ENCODE measurements at regions of chr17 and their contacts with region 1.

Region 1: DNA sequence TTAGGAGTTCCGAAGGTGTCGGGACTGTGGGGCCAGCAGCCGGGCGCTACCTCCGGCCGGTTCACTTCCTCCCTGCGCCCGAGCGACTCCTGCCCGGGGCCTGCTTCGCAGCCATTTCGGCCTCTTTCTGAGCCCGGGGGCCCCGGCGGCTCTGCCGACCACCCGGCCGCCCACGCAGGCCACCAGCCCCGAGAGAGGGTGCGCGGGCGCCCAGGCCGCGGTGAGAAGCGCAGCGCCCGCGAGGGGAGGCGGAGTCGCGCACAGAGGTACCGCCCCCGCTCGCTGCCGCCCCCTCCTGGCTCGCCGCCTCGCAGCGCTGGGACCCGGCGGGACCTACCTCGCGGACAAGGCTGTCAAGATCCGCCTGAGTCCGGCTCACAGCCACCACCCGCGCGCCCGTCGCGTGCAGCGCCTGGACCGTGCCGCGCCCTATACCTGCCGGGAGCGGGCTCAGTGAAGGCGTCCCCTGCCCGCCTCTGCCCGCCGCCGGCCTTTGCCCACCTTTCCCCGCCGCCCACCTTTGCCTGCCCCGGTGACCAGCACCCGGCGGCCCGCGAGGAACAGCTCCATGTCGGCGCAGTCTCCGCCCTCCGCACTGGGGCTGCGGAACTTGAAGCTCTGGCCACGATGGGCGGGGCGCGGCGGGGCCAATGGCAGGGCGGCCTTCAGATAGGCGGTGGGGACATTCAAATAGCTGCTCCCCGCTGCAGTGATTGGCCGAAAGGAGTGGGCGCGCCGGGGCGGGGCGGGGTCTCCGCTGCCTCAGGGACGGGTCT is at the start of gene DCXR:
- DNase-seq: peak; percentile 98 to 99
- ATAC-seq: peak; percentile 97
- H3K4me3 ChIP-seq: peak within 1 kb of the TSS; percentile 15 to 22
- H3K27ac ChIP-seq: peak within 1 kb of the TSS; percentile 20 to 85
- H3K4me1 ChIP-seq: no peaks in the 10 kb centered on the region
- H3K27me3 ChIP-seq: no peaks in the 10 kb centered on the region
- total RNA-seq, gene DCXR: 34.9 to 62.2 TPM

Region 2: GRCh38 chr17:82098072-82098821 is 60.9 kb after region 1 on chr17 and contains the start of gene FASN:
- intact Hi-C with region 1: loop called in 1 of 2 experiments (anchors 5 kb)
- DNase-seq: peak; percentile 93 to 97
- ATAC-seq: peak; percentile 89
- H3K4me3 ChIP-seq: peak within 1 kb of the TSS; percentile 65 to 73
- H3K27ac ChIP-seq: peak within 1 kb of the TSS in 1 of 2 donors; percentile 74
- H3K4me1 ChIP-seq: no peaks in the 10 kb centered on the region
- H3K27me3 ChIP-seq: peaks cover 0 to 2% of the 10 kb centered on the region in 2 donors
- total RNA-seq, gene FASN: 42.2 to 64.0 TPM